Sigmoid colon (tissue), 7 donors: ENCODE measurements at regions of chr10 and their contacts with region 1.

Region 1: DNA sequence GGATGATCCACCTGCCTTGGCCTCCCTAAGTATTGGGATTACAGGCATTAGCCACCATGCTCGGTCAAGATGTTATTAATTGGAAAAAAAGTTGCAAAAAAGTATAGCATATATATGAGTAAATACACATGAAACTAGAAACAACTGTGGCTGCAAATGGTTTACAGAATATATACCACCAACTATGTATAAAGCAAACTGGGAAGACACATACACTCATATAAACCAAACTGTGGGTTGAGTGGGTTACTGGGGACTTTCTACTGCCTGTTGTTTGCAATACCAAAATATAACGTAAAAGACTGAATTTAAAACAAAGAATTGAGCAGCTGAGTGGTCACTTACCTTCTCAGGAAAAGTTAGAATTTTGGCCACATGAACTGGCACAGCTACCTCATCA is 8.1 kb downstream of the POLR3A start:
- DNase-seq: no peak
- H3K4me3 ChIP-seq: no peak overlapping the region
- H3K27ac ChIP-seq: no peak overlapping the region
- H3K4me1 ChIP-seq: no peaks in the 10 kb centered on the region
- H3K27me3 ChIP-seq: no peaks in the 10 kb centered on the region
- CTCF ChIP-seq: no peak
- EP300 ChIP-seq: no peak
- POLR2A ChIP-seq: no peak

Region 2: GRCh38 chr10:77989081-77989724 is 32.0 kb before region 1 on chr10:
- intact Hi-C with region 1: loop called (anchors 5 kb)
- DNase-seq: no peak
- H3K4me3 ChIP-seq: no peak overlapping the region
- H3K27ac ChIP-seq: no peak overlapping the region
- H3K4me1 ChIP-seq: no peaks in the 10 kb centered on the region
- H3K27me3 ChIP-seq: no peaks in the 10 kb centered on the region
- CTCF ChIP-seq: no peak
- EP300 ChIP-seq: no peak
- POLR2A ChIP-seq: no peak